ENCODE measurements at regions of chr2 and their contacts with region 1.

Region 1: DNA sequence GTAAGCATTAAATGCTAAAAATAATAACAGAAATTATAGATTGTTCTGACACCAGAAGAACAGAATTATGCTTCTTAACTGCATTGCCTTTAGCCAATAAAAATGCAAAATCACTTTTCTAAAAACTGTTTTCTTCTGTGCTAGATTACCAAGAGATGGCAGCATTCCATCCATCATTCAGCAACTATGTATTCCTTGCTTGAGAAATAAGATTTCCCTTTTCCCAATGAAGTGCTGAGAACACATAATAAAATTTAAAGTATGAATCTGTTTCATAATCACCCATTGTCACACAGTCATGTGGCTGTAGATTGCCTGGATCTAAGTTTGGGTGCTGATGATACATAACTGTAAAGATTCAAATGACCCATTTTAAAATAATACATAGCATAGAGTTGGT is 504.2 kb downstream of the TDRD15 start:
- DNase-seq: no peak
- H3K4me3 ChIP-seq: no peak overlapping the region
- H3K27ac ChIP-seq: no peak overlapping the region
- H3K4me1 ChIP-seq: no peaks in the 10 kb centered on the region
- H3K27me3 ChIP-seq: no peaks in the 10 kb centered on the region
- CTCF ChIP-seq: no peak
- POLR2A ChIP-seq: no peak

Region 2: DNA sequence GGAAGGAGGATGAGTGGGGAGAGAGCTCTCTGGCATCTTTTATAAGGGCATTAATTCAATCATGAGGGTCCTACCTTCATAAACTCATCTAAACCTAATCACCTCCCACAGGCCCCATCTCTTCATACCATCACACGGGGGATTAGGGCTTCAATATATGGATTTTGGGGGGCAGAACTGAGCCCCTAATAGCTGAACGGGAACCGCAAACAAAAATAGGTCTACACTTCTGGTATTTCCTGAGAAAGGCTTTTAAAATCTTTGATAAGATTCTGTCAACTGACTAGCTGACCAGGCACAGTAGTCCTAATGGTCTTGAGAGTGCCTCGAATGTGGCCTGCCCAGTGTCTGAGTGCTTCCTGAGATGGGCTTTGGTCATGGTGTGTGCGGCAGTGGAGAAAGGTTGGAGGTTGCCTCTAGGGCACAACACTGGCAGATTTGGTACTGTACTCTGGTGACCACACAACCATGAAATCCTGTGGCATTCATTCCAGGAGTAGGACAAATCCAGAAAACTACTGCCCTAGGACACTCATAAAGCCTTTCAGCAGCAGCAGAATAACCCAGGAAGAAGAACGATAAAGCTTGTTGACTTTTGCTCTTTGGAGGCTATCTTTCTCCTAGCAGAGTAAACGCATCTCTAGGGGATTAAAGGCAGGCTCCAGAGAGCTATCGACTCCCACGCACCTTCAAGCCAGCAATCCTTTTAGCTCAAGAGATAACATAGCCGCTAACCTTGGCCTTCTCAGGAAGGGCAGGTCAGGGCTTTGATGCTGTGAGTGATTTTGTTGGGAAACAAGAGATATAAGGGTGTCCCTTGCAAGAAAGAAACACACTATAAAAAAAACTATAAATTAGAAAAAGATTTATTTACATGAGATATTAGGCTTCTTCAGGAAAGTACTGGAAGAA is 571.8 kb before region 1 on chr2:
- intact Hi-C with region 1: no loop called
- DNase-seq: no peak
- H3K4me3 ChIP-seq: no peak overlapping the region
- H3K27ac ChIP-seq: peak overlapping the region in 1 of 8 donors; percentile 14
- H3K4me1 ChIP-seq: peaks cover 0 to 3% (median 0%) of the 10 kb centered on the region in 6 donors
- H3K27me3 ChIP-seq: no peaks in the 10 kb centered on the region
- CTCF ChIP-seq: no peak
- POLR2A ChIP-seq: no peak

Region 3: DNA sequence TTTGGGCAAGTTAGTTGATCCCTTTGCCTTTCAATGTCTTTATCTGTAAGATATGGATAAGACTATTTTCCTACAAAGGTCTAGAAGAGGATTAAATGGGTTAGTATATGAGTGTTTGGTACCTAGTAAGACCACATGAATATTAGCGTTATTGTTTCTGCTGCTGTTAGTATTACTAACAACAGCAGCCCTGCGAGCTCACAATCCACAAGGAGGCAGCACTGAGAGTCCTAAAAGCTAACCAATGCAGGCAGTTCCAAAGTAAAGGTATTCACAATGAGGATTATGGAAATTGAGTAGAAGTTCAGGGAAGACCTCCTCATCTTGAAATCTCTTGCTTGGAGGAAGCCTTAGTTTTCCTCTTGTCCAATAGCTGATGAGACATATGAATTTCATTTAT is 255.3 kb before region 1 on chr2:
- intact Hi-C with region 1: no loop called
- DNase-seq: no peak
- H3K4me3 ChIP-seq: no peak overlapping the region
- H3K27ac ChIP-seq: no peak overlapping the region
- H3K4me1 ChIP-seq: no peaks in the 10 kb centered on the region
- H3K27me3 ChIP-seq: no peaks in the 10 kb centered on the region
- CTCF ChIP-seq: peak in 2 of 11 experiments; percentile 10 to 16
- POLR2A ChIP-seq: no peak

Region 4: GRCh38 chr2:21486445-21486844 is 141.5 kb before region 1 on chr2:
- intact Hi-C with region 1: no loop called
- DNase-seq: no peak
- H3K4me3 ChIP-seq: no peak overlapping the region
- H3K27ac ChIP-seq: no peak overlapping the region
- H3K4me1 ChIP-seq: no peaks in the 10 kb centered on the region
- H3K27me3 ChIP-seq: no peaks in the 10 kb centered on the region
- CTCF ChIP-seq: no peak
- POLR2A ChIP-seq: no peak

Region 5: GRCh38 chr2:21559351-21559750 is 68.6 kb before region 1 on chr2:
- intact Hi-C with region 1: loop called (anchors 2 kb)
- DNase-seq: no peak
- H3K4me3 ChIP-seq: no peak overlapping the region
- H3K27ac ChIP-seq: no peak overlapping the region
- H3K4me1 ChIP-seq: no peaks in the 10 kb centered on the region
- H3K27me3 ChIP-seq: no peaks in the 10 kb centered on the region
- CTCF ChIP-seq: no peak
- POLR2A ChIP-seq: no peak

Measured in spleen (tissue), 13 donors.